ENCODE measurements at regions of chrX and their contacts with region 1.

Region 1: DNA sequence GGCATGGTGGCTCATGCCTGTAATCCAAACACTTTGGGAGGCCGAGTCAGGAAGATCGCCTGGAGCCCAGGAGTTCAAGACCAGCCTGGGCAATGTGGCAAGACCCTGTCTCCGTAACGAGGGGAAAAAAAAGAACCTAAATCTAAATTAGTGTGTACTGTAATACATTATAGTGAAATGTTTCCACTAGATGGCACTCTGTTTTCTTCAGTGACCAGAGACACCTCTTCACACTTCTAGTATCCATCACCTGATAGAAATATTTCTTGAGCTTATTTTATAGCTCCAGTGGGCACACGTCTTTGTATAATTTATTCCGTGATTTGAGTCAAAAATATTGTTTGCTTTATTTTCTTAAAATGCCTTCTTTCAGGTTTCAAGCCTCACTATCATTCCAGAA is 600.9 kb upstream of the DIPK2B start:
- DNase-seq: no peak
- H3K4me3 Mint-ChIP-seq: peak overlapping the region; percentile 26
- H3K27ac Mint-ChIP-seq: peak overlapping the region; percentile 11
- H3K4me1 Mint-ChIP-seq: peaks cover 70% of the 10 kb centered on the region
- H3K27me3 Mint-ChIP-seq: peaks cover 3% of the 10 kb centered on the region

Region 2: GRCh38 chrX:45621376-45622041 is 180.0 kb before region 1 on chrX:
- intact Hi-C with region 1: loop called (anchors 1 kb)
- DNase-seq: no peak
- H3K4me3 Mint-ChIP-seq: no peak overlapping the region
- H3K27ac Mint-ChIP-seq: peak overlapping the region; percentile 91
- H3K4me1 Mint-ChIP-seq: peaks cover 19% of the 10 kb centered on the region
- H3K27me3 Mint-ChIP-seq: no peaks in the 10 kb centered on the region

Region 3: DNA sequence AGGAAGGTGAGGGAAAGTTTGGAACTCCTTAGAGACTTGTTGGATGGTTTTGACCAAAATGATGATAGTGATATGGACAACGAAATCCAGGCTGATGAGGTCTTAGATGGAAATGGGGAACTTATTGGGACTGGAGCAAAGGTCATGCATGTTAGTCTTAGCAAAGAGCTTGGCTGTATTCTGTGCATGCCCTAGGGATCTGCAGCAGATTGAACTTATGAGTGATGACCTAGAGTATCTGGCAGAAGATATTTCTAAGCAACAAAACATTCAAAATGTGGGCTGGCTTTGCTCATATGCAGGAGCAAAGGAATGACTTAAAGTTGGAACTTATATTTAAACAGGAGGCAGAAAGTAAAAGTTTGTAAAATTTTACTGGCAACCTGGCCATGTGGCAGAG is 111.6 kb before region 1 on chrX:
- intact Hi-C with region 1: no loop called
- DNase-seq: no peak
- H3K4me3 Mint-ChIP-seq: no peak overlapping the region
- H3K27ac Mint-ChIP-seq: no peak overlapping the region
- H3K4me1 Mint-ChIP-seq: no peaks in the 10 kb centered on the region
- H3K27me3 Mint-ChIP-seq: no peaks in the 10 kb centered on the region

Region 4: GRCh38 chrX:45710081-45710801 is 91.3 kb before region 1 on chrX:
- intact Hi-C with region 1: loop called (anchors 1 kb)
- DNase-seq: peak; percentile 16
- H3K4me3 Mint-ChIP-seq: peak overlapping the region; percentile 11
- H3K27ac Mint-ChIP-seq: peak overlapping the region; percentile 90
- H3K4me1 Mint-ChIP-seq: peaks cover 45% of the 10 kb centered on the region
- H3K27me3 Mint-ChIP-seq: no peaks in the 10 kb centered on the region

Region 5: DNA sequence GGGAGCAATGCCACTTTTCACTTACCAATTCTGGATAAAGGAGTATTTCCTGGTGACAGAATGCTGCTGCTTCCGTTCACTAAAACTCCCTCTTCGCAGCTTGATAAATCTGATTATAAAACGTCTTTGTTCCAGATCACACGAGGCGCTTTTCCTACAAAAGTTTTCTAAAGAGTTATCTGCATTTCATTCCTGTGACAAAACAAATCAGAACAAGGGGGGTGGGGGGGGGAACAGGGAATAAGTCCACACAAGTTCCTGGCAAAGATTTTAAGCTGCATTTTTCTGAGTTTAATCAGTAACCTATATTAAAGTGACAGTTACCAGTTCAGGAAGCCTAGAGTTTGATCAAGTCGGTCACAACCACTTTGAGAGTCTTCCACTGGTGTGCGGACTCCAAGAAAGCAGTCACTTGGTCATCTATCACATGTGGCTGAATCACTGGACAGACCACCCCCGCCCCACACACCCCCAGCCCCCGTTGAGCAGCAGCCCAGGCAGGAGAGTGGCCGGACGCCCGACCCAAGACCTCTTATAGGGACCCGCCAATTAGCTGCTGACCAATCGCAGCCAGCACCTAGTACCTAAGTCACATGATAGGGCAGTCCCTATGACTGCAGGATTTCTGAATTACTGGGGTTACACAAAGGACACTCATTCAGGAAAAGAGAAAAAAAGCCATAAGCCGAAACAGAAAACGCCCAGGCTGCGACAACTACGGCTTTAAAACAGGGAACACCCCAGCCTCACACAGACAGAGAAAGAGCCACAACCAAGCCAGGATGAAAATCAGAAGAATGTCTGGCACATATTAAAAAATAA is 31.6 kb before region 1 on chrX:
- intact Hi-C with region 1: loop called (anchors 1 kb)
- DNase-seq: peak; percentile 6
- H3K4me3 Mint-ChIP-seq: peak overlapping the region; percentile 98
- H3K27ac Mint-ChIP-seq: peak overlapping the region; percentile 98
- H3K4me1 Mint-ChIP-seq: peaks cover 59% of the 10 kb centered on the region
- H3K27me3 Mint-ChIP-seq: no peaks in the 10 kb centered on the region

Region 6: DNA sequence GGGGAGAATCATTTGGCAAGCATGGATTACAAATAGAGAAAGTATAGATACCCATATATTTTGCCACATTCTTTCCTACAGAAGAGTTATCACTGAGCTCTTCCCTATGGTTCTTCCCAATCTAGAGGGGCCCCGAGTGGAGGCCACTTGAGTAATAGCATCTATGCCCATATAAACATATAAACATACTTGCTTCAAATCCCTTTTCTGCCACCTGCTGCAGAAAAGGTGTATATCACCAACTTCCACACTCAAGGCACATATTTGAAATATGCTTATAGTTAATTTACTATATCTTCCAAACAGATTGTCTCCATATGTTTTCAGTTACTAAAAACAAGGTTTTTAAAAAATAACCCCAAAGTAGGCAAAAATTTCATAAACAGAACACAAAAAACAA is 42.0 kb after region 1 on chrX:
- intact Hi-C with region 1: loop called (anchors 1 kb)
- DNase-seq: no peak
- H3K4me3 Mint-ChIP-seq: peak overlapping the region; percentile 75
- H3K27ac Mint-ChIP-seq: peak overlapping the region; percentile 56
- H3K4me1 Mint-ChIP-seq: peaks cover 47% of the 10 kb centered on the region
- H3K27me3 Mint-ChIP-seq: no peaks in the 10 kb centered on the region

Region 7: GRCh38 chrX:46279925-46280313 is 478.4 kb after region 1 on chrX:
- intact Hi-C with region 1: loop called (anchors 10 kb)
- DNase-seq: no peak
- H3K4me3 Mint-ChIP-seq: no peak overlapping the region
- H3K27ac Mint-ChIP-seq: peak overlapping the region; percentile 23
- H3K4me1 Mint-ChIP-seq: peaks cover 20% of the 10 kb centered on the region
- H3K27me3 Mint-ChIP-seq: no peaks in the 10 kb centered on the region

Region 8: GRCh38 chrX:46325312-46325877 is 523.8 kb after region 1 on chrX:
- intact Hi-C with region 1: loop called (anchors 2 kb)
- DNase-seq: no peak
- H3K4me3 Mint-ChIP-seq: no peak overlapping the region
- H3K27ac Mint-ChIP-seq: peak overlapping the region; percentile 65
- H3K4me1 Mint-ChIP-seq: peaks cover 49% of the 10 kb centered on the region
- H3K27me3 Mint-ChIP-seq: no peaks in the 10 kb centered on the region

Region 9: GRCh38 chrX:46408553-46409407 is 607.2 kb after region 1 on chrX:
- intact Hi-C with region 1: no loop called
- DNase-seq: peak; percentile 2
- H3K4me3 Mint-ChIP-seq: no peak overlapping the region
- H3K27ac Mint-ChIP-seq: no peak overlapping the region
- H3K4me1 Mint-ChIP-seq: no peaks in the 10 kb centered on the region
- H3K27me3 Mint-ChIP-seq: peaks cover 3% of the 10 kb centered on the region